CD4-positive, alpha-beta T cell (primary cell): ENCODE measurements at regions of chr6 and their contacts with region 1.

Region 1: GRCh38 chr6:131602781-131603312 is 25.2 kb downstream of the MED23 start:
- DNase-seq: no peak
- ATAC-seq: no peak
- H3K4me3 ChIP-seq: no peak overlapping the region
- H3K4me3 Mint-ChIP-seq: no peak overlapping the region
- H3K27ac ChIP-seq: no peak overlapping the region
- H3K27ac Mint-ChIP-seq: no peak overlapping the region
- H3K4me1 ChIP-seq: no peaks in the 10 kb centered on the region
- H3K4me1 Mint-ChIP-seq: no peaks in the 10 kb centered on the region
- H3K27me3 ChIP-seq: no peaks in the 10 kb centered on the region
- H3K27me3 Mint-ChIP-seq: no peaks in the 10 kb centered on the region
- CTCF ChIP-seq: no peak

Region 2: GRCh38 chr6:131615275-131615674 is 12.4 kb after region 1 on chr6:
- CTCF ChIA-PET with region 1: no interaction called
- POLR2A ChIA-PET with region 1: no interaction called
- intact Hi-C with region 1: loop called in 1 of 2 experiments (anchors 2 kb)
- DNase-seq: no peak
- ATAC-seq: no peak
- H3K4me3 ChIP-seq: no peak overlapping the region
- H3K4me3 Mint-ChIP-seq: no peak overlapping the region
- H3K27ac ChIP-seq: no peak overlapping the region
- H3K27ac Mint-ChIP-seq: no peak overlapping the region
- H3K4me1 ChIP-seq: no peaks in the 10 kb centered on the region
- H3K4me1 Mint-ChIP-seq: peaks cover 5% of the 10 kb centered on the region
- H3K27me3 ChIP-seq: no peaks in the 10 kb centered on the region
- H3K27me3 Mint-ChIP-seq: no peaks in the 10 kb centered on the region
- CTCF ChIP-seq: no peak